A673 (cell line): ENCODE measurements at regions of chr13 and their contacts with region 1.

Region 1: GRCh38 chr13:52665325-52665724 is 12.7 kb downstream of the SUGT1 start:
- DNase-seq: peak; percentile 34
- H3K4me3 ChIP-seq: no peak overlapping the region
- H3K27ac ChIP-seq: no peak overlapping the region
- H3K4me1 ChIP-seq: peaks cover 6% of the 10 kb centered on the region
- H3K27me3 ChIP-seq: no peaks in the 10 kb centered on the region
- CTCF ChIP-seq: peak; percentile 64

Region 2: DNA sequence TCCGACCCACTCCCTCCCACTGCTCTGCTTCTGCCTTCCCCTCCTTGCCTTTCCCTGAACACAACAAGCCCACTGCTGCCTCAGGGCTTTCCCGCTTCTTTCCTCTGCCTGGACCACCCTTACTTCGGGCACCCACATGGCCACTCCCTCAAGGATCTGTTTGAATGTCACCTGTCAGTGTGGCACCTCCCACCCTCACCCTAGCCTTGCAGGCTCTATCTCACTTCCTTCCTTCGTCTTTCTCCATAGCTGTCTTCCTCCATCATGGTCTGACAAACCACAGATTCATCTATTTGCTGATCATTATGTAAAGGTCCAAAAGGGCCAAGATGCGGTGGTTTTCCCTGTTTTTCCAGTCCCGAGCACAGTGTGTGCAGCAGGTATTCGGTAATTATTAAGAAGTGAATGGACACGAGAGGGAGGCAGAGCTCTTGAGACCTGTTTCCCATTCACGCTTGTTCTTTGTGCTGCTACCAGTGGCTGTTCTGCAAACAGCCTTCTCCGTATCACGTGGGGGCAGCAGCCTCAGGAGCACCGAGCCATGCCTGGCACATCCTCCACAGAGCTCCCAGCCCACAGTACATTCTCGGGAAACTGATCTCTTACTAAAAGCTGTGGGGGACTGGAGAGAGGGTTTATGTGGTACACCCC is 753.3 kb before region 1 on chr13:
- CTCF ChIA-PET with region 1: no interaction called
- POLR2A ChIA-PET with region 1: no interaction called
- intact Hi-C with region 1: no loop called
- DNase-seq: no peak
- H3K4me3 ChIP-seq: no peak overlapping the region
- H3K27ac ChIP-seq: no peak overlapping the region
- H3K4me1 ChIP-seq: no peaks in the 10 kb centered on the region
- H3K27me3 ChIP-seq: no peaks in the 10 kb centered on the region
- CTCF ChIP-seq: no peak

Region 3: DNA sequence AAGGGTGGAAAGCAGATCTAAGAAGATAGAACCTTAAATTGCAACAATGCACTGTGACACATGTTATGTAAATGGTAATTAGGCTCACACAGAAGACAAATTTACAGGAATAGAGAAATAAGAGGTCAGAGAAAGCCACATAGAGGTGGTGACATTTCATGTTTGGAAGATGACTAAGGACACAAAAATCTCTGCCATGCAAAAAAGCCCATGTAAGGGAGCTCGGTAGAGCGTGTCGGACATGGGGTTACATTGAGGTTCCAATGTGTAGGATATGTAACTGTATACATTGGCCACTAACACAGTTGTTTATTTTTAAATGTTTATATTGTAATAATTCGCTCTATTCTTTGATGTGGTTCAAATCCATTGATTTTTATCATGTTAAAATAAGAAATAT is 21.1 kb after region 1 on chr13:
- CTCF ChIA-PET with region 1: no interaction called
- POLR2A ChIA-PET with region 1: no interaction called
- intact Hi-C with region 1: no loop called
- DNase-seq: no peak
- H3K4me3 ChIP-seq: no peak overlapping the region
- H3K27ac ChIP-seq: no peak overlapping the region
- H3K4me1 ChIP-seq: no peaks in the 10 kb centered on the region
- H3K27me3 ChIP-seq: no peaks in the 10 kb centered on the region
- CTCF ChIP-seq: no peak

Region 4: DNA sequence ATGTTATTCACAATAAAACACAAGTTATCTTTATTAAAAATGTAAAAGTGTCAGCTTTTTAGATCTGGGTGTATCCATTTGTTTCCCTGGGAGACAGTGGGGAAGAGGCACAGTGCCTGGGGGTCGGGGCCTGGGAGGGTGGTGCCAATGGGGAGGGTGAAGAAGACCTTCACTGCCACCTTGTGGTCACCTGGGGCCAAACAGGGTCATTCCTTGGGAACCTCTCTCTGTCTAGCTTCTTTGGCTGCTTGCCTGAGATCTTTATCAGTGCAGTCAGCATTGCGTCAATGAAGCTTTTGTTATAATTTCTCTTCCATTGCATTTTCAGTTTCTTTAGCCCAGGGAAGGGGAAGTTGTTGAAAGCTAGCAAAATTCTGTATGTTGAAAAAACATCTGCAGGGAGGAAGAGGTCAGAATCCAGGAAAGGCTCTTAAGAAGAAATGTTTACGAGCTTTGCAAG is 144.0 kb after region 1 on chr13:
- CTCF ChIA-PET with region 1: interaction called, 8 read pairs
- POLR2A ChIA-PET with region 1: no interaction called
- intact Hi-C with region 1: loop called (anchors 5 kb)
- DNase-seq: peak; percentile 92
- H3K4me3 ChIP-seq: no peak overlapping the region
- H3K27ac ChIP-seq: no peak overlapping the region
- H3K4me1 ChIP-seq: peaks cover 19% of the 10 kb centered on the region
- H3K27me3 ChIP-seq: no peaks in the 10 kb centered on the region
- CTCF ChIP-seq: peak; percentile 79

Region 5: DNA sequence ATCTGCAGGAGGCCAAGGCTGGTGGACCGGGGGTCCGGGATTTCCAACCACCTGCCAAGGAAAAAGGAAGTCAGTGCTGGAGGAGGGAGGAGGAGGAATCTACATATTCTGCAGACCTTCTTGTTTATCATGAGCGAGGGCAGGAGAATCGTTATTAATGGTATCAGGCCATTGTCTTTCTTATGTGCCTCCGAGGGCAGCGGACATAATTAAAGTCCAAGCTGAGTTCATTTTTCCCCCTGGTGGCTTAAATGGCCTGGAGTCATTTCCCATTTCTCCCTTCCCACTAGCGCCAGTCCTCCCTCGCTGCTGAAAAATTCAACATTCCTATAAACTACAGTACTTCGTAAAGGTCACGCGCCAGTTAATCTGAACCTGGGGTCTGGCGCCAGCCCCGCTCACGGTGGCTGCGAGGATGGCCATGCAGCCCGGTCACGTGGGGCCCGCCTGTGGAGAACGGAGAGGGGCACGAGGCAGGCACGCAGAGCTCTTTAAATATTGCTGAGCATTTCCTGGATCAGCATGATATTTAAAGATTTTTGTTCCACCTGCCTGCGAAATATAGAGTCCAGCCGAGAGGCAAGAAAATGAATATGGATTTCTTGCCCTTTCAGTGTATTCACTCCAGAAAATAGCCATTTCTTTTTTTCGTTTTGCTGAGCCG is 268.4 kb after region 1 on chr13:
- CTCF ChIA-PET with region 1: no interaction called
- POLR2A ChIA-PET with region 1: no interaction called
- intact Hi-C with region 1: no loop called
- DNase-seq: no peak
- H3K4me3 ChIP-seq: no peak overlapping the region
- H3K27ac ChIP-seq: no peak overlapping the region
- H3K4me1 ChIP-seq: no peaks in the 10 kb centered on the region
- H3K27me3 ChIP-seq: no peaks in the 10 kb centered on the region
- CTCF ChIP-seq: no peak

Region 6: GRCh38 chr13:52980695-52981094 is 315.4 kb after region 1 on chr13:
- CTCF ChIA-PET with region 1: no interaction called
- POLR2A ChIA-PET with region 1: no interaction called
- intact Hi-C with region 1: no loop called
- DNase-seq: no peak
- H3K4me3 ChIP-seq: no peak overlapping the region
- H3K27ac ChIP-seq: no peak overlapping the region
- H3K4me1 ChIP-seq: no peaks in the 10 kb centered on the region
- H3K27me3 ChIP-seq: peaks cover 3% of the 10 kb centered on the region
- CTCF ChIP-seq: no peak